CD8-positive, alpha-beta T cell (primary cell): ENCODE measurements at regions of chr12 and their contacts with region 1.

Region 1: DNA sequence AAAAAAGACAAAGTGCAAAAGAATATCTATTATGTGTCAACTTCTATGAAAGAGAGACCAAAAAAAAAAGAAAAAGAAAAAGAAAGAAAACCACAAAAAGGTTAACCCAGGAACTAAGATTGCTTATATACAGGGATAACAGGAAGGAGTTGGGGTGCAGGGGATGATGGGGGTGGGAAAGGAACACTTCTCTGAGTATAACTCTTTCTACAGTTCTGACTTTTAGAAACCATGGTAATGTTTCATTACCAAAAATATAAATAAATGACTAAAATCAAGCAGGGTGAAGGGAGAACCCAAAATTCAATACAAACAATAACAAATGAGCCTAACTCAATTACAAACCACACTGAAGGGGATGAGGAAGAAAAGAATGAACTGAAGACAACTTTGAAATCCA is 9.1 kb downstream of the IFNG-AS1 start:
- DNase-seq: no peak
- ATAC-seq: no peak
- H3K4me3 ChIP-seq: no peak overlapping the region
- H3K4me3 Mint-ChIP-seq: no peak overlapping the region
- H3K27ac ChIP-seq: no peak overlapping the region
- H3K27ac Mint-ChIP-seq: no peak overlapping the region
- H3K4me1 ChIP-seq: peaks cover 6% of the 10 kb centered on the region
- H3K4me1 Mint-ChIP-seq: peaks cover 35% of the 10 kb centered on the region
- H3K27me3 ChIP-seq: no peaks in the 10 kb centered on the region
- H3K27me3 Mint-ChIP-seq: no peaks in the 10 kb centered on the region
- CTCF ChIP-seq: no peak

Region 2: DNA sequence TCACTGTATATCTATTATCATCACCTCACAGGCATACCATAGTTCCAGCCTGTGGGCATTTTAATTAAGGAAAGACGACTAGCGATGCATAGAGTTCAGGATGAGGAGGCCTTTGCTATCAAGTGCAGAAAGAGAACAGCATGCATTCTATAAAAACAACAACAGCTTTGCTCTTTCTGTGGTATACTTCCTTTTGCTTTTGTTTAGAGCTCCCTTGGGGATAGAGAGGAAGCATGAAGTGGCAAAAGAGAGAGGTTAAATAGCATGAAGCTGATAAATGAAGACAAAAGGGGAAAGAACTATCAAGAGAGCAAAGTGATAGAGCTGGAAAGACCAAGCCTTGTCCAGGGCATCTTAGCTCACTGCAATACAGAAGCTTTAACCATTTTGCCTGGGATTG is 14.3 kb after region 1 on chr12:
- CTCF ChIA-PET with region 1: interaction called, 5 read pairs
- POLR2A ChIA-PET with region 1: interaction called, 3 read pairs
- intact Hi-C with region 1: loop called in 1 of 2 experiments (anchors 2 kb)
- DNase-seq: no peak
- ATAC-seq: no peak
- H3K4me3 ChIP-seq: no peak overlapping the region
- H3K4me3 Mint-ChIP-seq: no peak overlapping the region
- H3K27ac ChIP-seq: no peak overlapping the region
- H3K27ac Mint-ChIP-seq: no peak overlapping the region
- H3K4me1 ChIP-seq: peaks cover 3% of the 10 kb centered on the region
- H3K4me1 Mint-ChIP-seq: peaks cover 25% of the 10 kb centered on the region
- H3K27me3 ChIP-seq: no peaks in the 10 kb centered on the region
- H3K27me3 Mint-ChIP-seq: no peaks in the 10 kb centered on the region
- CTCF ChIP-seq: no peak

Region 3: GRCh38 chr12:68236421-68237059 is 238.2 kb after region 1 on chr12:
- CTCF ChIA-PET with region 1: no interaction called
- POLR2A ChIA-PET with region 1: no interaction called
- intact Hi-C with region 1: no loop called
- DNase-seq: peak in 8 of 9 experiments; percentile 11 to 84 (median 36)
- ATAC-seq: peak; percentile 79
- H3K4me3 ChIP-seq: peak overlapping the region; percentile 46 to 48
- H3K4me3 Mint-ChIP-seq: peak overlapping the region; percentile 94
- H3K27ac ChIP-seq: peak overlapping the region; percentile 23 to 60
- H3K27ac Mint-ChIP-seq: peak overlapping the region; percentile 97
- H3K4me1 ChIP-seq: peaks cover 35% of the 10 kb centered on the region
- H3K4me1 Mint-ChIP-seq: peaks cover 48% of the 10 kb centered on the region
- H3K27me3 ChIP-seq: no peaks in the 10 kb centered on the region
- H3K27me3 Mint-ChIP-seq: no peaks in the 10 kb centered on the region
- CTCF ChIP-seq: no peak

Region 4: DNA sequence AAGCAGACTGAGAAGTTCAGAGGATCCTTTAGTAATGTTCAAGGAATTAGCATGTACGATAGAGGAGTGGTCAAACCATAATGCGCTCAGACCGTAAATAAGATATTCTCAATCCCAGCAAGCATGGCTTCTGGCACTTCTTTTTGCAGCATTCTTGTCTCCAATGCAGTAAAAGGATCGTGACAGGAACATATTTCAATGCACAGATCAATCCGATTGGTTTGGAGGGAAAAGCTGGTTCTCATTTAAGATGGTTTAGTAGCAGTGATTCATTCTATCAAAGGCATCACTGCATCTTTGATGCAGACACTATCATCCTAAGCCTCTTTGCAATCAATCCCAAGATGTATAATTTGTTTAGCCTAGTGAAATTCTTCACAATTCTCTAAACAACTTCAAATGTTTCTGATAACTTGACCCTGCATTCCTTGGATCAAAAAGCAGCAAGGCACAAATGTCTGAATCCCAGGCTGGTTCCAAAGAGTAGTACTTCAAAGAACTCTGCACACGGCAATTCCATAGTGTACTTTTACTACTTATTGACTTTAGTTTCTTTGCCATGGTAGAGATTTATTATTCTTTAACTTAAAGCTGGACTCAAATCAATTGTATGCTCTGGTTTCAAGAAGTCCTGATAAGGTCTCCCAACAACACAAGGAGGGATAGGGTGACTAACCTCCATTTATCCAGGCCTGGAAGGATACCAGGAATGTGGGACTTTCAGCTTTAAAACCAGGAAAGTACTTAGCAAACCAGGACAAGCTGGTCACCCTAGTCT is 430.5 kb after region 1 on chr12:
- CTCF ChIA-PET with region 1: no interaction called
- POLR2A ChIA-PET with region 1: no interaction called
- intact Hi-C with region 1: no loop called
- DNase-seq: no peak
- ATAC-seq: no peak
- H3K4me3 ChIP-seq: no peak overlapping the region
- H3K4me3 Mint-ChIP-seq: no peak overlapping the region
- H3K27ac ChIP-seq: no peak overlapping the region
- H3K27ac Mint-ChIP-seq: no peak overlapping the region
- H3K4me1 ChIP-seq: no peaks in the 10 kb centered on the region
- H3K4me1 Mint-ChIP-seq: peaks cover 3% of the 10 kb centered on the region
- H3K27me3 ChIP-seq: no peaks in the 10 kb centered on the region
- H3K27me3 Mint-ChIP-seq: no peaks in the 10 kb centered on the region
- CTCF ChIP-seq: no peak

Region 5: GRCh38 chr12:68559984-68560850 is 561.8 kb after region 1 on chr12:
- CTCF ChIA-PET with region 1: no interaction called
- POLR2A ChIA-PET with region 1: no interaction called
- intact Hi-C with region 1: no loop called
- DNase-seq: no peak
- ATAC-seq: no peak
- H3K4me3 ChIP-seq: no peak overlapping the region
- H3K4me3 Mint-ChIP-seq: no peak overlapping the region
- H3K27ac ChIP-seq: no peak overlapping the region
- H3K27ac Mint-ChIP-seq: no peak overlapping the region
- H3K4me1 ChIP-seq: peaks cover 19% of the 10 kb centered on the region
- H3K4me1 Mint-ChIP-seq: peaks cover 32% of the 10 kb centered on the region
- H3K27me3 ChIP-seq: no peaks in the 10 kb centered on the region
- H3K27me3 Mint-ChIP-seq: no peaks in the 10 kb centered on the region
- CTCF ChIP-seq: no peak